OCI-LY7 (cell line): ENCODE measurements at regions of chr16 and their contacts with region 1.

Region 1: GRCh38 chr16:65117811-65118448 is 3.9 kb downstream of the CDH11 start:
- DNase-seq: peak; percentile 75
- H3K4me3 ChIP-seq: no peak overlapping the region
- H3K27ac ChIP-seq: no peak overlapping the region
- H3K4me1 ChIP-seq: peaks cover 9% of the 10 kb centered on the region
- CTCF ChIP-seq: peak; percentile 95

Region 2: DNA sequence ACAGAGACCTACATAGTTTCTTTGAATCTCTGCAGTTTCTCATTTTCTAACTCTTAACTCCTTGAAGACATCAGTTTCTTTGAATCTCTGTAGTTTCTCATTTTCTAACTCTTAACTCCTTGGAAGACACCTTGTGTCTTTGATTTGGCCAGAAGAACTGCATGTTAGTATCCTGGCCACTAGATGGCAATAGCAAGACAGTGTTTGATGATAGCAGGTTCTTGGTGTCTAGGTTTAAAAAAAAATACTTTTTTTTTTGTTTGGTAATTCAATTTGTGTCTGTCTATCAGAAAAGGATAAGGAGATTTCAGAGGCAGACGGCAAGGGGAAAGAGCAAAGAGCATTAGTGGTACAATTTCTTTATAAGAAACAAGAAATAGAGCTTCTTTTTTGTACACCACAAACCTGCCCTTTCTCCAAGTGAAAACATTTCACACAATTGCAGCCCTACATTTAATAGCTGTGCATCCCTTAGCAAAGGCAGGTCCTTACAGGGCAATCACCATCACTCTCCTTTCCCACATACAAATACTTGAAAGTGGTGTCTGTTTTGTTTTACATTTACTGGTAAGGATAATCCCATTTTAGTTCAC is 1756.8 kb before region 1 on chr16:
- CTCF ChIA-PET with region 1: no interaction called
- POLR2A ChIA-PET with region 1: no interaction called
- intact Hi-C with region 1: loop called (anchors 2 kb)
- DNase-seq: peak; percentile 64
- H3K4me3 ChIP-seq: no peak overlapping the region
- H3K27ac ChIP-seq: no peak overlapping the region
- H3K4me1 ChIP-seq: no peaks in the 10 kb centered on the region
- CTCF ChIP-seq: peak; percentile 92

Region 3: GRCh38 chr16:63461248-63461841 is 1656.6 kb before region 1 on chr16:
- CTCF ChIA-PET with region 1: no interaction called
- POLR2A ChIA-PET with region 1: no interaction called
- intact Hi-C with region 1: loop called (anchors 1 kb)
- DNase-seq: peak; percentile 45
- H3K4me3 ChIP-seq: no peak overlapping the region
- H3K27ac ChIP-seq: no peak overlapping the region
- H3K4me1 ChIP-seq: no peaks in the 10 kb centered on the region
- CTCF ChIP-seq: peak; percentile 75